ENCODE measurements at regions of chrX and their contacts with region 1.

Region 1: GRCh38 chrX:39149761-39150160 is 348.5 kb downstream of the MID1IP1 start:
- DNase-seq: peak; percentile 75
- H3K4me3 ChIP-seq: no peak overlapping the region
- H3K27ac ChIP-seq: no peak overlapping the region
- H3K4me1 ChIP-seq: no peaks in the 10 kb centered on the region
- H3K27me3 ChIP-seq: no peaks in the 10 kb centered on the region
- CTCF ChIP-seq: peak; percentile 53 to 67 (median 57)
- EP300 ChIP-seq: no peak
- POLR2A ChIP-seq: no peak

Region 2: GRCh38 chrX:38468563-38469157 is 681.1 kb before region 1 on chrX:
- in situ Hi-C with region 1: no loop called
- intact Hi-C with region 1: no loop called
- DNase-seq: no peak
- H3K4me3 ChIP-seq: no peak overlapping the region
- H3K27ac ChIP-seq: no peak overlapping the region
- H3K4me1 ChIP-seq: no peaks in the 10 kb centered on the region
- H3K27me3 ChIP-seq: no peaks in the 10 kb centered on the region
- CTCF ChIP-seq: no peak
- EP300 ChIP-seq: no peak
- POLR2A ChIP-seq: no peak

Region 3: DNA sequence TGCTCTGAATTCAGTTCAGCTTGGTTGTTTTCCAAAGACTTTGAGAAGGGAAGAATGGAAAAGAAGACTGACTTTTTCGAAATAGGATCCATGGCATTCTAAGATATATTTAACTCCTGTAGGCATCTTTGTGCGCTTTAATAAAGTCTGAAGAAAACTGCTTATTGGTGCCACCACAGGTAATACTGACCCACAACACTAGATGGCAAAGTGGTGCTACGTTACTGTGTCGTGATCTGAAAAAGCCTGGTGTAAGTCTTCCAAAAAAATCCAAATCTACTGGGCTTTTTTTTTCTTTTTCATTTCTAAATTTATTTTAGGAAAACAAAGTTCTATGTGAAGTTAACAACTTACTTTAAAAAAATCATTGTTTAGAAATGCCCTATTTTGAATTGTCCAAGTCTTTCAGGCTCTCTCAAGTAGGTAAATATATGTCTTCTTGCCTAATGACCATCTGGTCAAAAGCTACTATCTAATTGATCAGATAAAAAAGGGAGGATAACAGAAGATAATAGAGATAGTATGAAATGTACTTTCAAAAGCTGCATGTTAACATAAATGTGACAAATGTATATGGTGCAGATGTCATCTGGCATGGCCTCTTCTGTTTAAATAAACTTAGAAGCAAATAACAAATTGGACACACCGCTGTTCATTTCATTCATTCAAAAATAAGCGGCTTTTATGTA is 395.5 kb before region 1 on chrX:
- in situ Hi-C with region 1: loop called in 1 of 4 experiments (anchors 25 kb)
- intact Hi-C with region 1: no loop called
- DNase-seq: no peak
- H3K4me3 ChIP-seq: no peak overlapping the region
- H3K27ac ChIP-seq: no peak overlapping the region
- H3K4me1 ChIP-seq: no peaks in the 10 kb centered on the region
- H3K27me3 ChIP-seq: no peaks in the 10 kb centered on the region
- CTCF ChIP-seq: peak; percentile 54 to 67 (median 58)
- EP300 ChIP-seq: no peak
- POLR2A ChIP-seq: no peak

Region 4: DNA sequence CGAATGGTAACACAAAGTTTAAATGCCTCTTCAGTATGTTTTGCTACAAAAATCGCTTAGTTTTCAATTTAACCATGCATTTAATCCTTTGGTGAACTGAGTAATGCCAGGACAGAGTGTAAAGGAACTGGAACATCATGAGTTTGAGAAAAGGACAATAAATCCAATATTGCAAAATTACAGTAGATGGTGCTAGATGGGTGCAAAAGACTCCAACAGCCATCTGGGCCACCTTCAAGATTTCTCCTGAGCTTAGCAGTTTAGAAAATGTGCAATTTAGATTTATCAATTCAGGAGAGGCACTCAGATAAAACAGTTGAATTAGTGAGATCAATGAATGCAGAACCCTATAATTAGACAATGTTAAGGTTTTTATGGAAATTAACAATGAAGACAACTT is 381.7 kb before region 1 on chrX:
- in situ Hi-C with region 1: loop called (anchors 10 to 25 kb)
- intact Hi-C with region 1: no loop called
- DNase-seq: no peak
- H3K4me3 ChIP-seq: no peak overlapping the region
- H3K27ac ChIP-seq: no peak overlapping the region
- H3K4me1 ChIP-seq: no peaks in the 10 kb centered on the region
- H3K27me3 ChIP-seq: no peaks in the 10 kb centered on the region
- CTCF ChIP-seq: peak in 4 of 5 experiments; percentile 18 to 46 (median 38)
- EP300 ChIP-seq: no peak
- POLR2A ChIP-seq: no peak

Region 5: GRCh38 chrX:38774249-38774648 is 375.5 kb before region 1 on chrX:
- in situ Hi-C with region 1: loop called (anchors 10 to 25 kb)
- intact Hi-C with region 1: no loop called
- DNase-seq: no peak
- H3K4me3 ChIP-seq: no peak overlapping the region
- H3K27ac ChIP-seq: no peak overlapping the region
- H3K4me1 ChIP-seq: no peaks in the 10 kb centered on the region
- H3K27me3 ChIP-seq: no peaks in the 10 kb centered on the region
- CTCF ChIP-seq: no peak
- EP300 ChIP-seq: no peak
- POLR2A ChIP-seq: no peak

Region 6: GRCh38 chrX:38985375-38985774 is 164.4 kb before region 1 on chrX:
- in situ Hi-C with region 1: loop called in 1 of 4 experiments (anchors 25 kb)
- intact Hi-C with region 1: no loop called
- DNase-seq: no peak
- H3K4me3 ChIP-seq: no peak overlapping the region
- H3K27ac ChIP-seq: no peak overlapping the region
- H3K4me1 ChIP-seq: peaks cover 0 to 5% (median 0%) of the 10 kb centered on the region in 4 donors
- H3K27me3 ChIP-seq: no peaks in the 10 kb centered on the region
- CTCF ChIP-seq: peak in 1 of 5 experiments; percentile 11
- EP300 ChIP-seq: no peak
- POLR2A ChIP-seq: no peak